ENCODE measurements at regions of chr12 and their contacts with region 1.

Region 1: DNA sequence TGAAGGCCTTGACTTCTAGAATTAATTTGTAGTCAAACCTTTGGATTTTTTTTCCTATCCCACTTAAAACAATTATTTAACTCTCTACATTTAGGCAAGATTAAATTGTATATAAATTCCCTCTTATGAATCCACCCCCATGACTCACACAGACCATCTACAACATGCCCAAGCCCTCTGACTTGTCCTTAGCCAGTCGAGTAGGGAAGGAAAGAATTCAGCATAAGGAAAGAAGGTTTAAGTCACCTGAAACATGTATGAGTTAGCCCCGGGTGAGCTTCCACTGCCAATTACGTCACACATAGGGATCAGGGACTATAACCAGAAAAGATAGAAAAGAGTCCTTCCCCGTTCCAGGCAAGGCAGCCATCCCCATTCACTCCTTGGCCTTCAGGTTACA is 14.9 kb upstream of the RESF1 start:
- DNase-seq: no peak
- H3K4me3 ChIP-seq: no peak overlapping the region
- CTCF ChIP-seq: no peak

Region 2: DNA sequence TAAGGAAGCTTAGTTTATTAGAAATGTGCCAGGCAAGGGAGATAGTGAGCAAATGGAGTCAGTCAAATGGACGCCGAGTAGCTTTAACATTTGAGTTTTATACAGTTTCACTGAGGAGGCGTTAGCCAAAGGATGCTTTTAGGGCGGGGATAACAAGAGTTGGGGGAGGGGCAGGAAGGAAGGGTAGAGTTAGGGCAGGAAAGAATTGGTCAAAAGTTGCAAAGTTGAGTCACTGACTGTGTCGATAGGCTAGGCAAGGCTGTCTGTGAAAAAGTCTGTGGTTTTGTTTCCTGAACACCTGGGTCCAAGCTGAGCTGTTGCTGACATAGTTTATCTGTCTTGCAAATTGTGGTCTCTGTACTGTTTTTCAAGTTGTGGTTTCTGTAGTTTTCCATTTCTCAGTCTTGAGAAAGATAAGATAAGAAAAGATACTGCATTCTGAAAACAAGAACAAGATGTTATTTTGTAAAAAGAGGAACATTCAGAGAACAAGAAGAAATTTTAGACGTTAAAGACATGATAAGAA is 47.7 kb before region 1 on chr12:
- in situ Hi-C with region 1: loop called (anchors 10 kb)
- DNase-seq: no peak
- H3K4me3 ChIP-seq: no peak overlapping the region
- CTCF ChIP-seq: no peak

Region 3: DNA sequence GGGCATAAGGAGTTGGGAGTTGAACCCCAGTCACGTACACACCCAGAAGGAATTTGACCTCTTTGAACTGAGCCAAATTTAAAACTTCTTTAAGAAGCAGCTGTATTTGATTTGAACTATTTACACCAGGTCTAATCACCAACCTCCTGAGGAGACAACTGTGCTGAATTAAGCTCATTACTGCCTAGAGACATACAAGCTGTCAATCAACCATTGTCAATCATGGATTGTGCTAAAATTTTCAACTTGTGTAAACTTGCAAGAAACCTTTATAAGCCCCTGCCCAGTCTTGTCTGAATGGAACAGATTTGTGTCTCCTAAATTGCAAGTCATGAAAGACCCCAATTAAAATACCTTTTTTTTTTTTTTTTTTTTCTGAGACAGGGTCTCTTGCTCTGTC is 29.4 kb before region 1 on chr12:
- in situ Hi-C with region 1: no loop called
- DNase-seq: no peak
- H3K4me3 ChIP-seq: no peak overlapping the region
- CTCF ChIP-seq: no peak

Region 4: GRCh38 chr12:31973818-31974217 is 29.5 kb after region 1 on chr12:
- in situ Hi-C with region 1: no loop called
- DNase-seq: no peak
- H3K4me3 ChIP-seq: no peak overlapping the region
- CTCF ChIP-seq: no peak

Region 5: DNA sequence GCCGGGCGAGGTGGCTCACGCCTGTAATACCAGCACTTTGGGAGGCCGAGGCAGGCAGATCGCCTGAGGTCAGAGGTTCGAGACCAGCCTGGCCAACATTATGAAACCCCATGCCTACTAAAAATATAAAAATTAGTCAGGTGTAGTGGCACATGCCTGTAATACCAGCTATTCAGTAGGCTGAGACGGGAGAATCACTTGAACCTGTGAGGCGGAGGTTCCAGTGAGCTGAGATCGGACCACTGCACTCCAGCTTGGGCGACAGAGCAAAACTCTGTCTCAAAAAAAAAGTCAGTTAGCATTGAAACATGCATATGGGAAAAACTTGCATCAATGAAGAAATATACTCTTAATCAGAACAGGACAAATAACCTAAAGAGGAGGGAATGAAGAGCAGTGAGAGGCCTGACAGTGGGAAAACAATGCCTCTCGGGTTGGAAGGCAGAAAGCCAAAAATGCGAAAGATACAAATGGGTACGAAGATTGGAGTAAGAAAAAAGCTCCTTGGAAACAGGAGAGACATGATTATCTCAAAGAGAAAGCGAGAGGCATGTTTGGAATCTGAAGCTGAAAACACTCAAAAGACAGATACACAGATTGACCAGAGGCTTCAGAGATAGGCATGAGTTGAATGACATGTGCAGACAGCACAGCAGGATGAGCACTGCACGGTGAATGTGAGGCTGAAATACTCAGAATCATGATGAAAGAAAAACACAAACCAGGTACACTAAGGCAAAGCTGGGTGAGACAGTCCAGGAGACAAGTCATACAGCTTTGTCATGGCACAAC is 45.5 kb after region 1 on chr12:
- in situ Hi-C with region 1: no loop called
- DNase-seq: no peak
- H3K4me3 ChIP-seq: no peak overlapping the region
- CTCF ChIP-seq: no peak